ENCODE measurements at regions of chr4 and their contacts with region 1.

Region 1: GRCh38 chr4:6986781-6987587 is 56.2 kb upstream of the TADA2B start:
- H3K4me3 ChIP-seq: peak overlapping the region; percentile 75
- H3K27ac ChIP-seq: peak overlapping the region; percentile 65
- H3K4me1 ChIP-seq: peaks cover 8% of the 10 kb centered on the region
- CTCF ChIP-seq: no peak

Region 2: DNA sequence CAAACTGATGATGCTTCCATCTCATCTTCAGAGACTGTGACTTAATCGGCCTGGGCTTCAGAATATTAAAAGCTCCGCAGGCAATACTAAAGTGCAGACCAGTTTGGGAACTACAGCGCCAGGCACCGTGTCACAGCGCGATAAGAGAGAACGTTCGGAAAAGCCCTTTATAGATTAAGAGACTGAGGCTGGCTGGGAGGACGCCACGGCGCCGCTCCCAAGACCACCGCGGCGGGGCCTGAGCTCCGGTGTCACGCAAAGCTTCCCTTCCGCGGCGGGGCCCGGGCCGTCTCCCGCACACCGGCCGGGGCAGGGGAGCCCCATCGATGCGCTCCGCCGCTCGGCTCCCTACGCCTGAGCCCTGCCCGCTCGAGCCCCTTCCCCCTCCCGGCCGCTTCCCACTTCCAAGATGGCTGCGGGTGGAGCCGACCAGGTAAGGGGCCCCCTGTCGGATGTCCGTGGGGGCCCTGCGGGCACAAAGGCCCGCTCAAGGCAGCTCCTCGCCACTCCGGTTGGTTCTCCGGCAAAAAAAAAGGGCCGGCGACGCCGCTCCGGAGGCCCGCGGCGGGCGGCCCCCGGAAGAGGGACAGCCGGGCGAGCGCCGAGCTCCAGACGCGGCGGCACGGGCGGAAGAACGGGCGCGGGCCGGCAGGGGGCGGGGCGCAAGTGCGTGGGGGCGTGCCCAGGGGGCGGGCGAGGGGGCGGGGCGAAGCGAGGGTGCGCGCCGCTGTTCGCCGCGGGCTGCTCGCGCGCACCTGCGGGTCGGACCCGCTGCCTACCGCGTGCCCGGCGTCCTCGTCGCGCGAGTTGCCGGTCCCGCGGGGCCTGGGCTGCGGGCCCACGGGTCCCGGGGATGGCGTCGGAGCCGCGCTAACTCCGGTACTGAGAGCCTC is 77.7 kb before region 1 on chr4 and contains the start of gene TBC1D14:
- CTCF ChIA-PET with region 1: interaction called, 3 read pairs
- POLR2A ChIA-PET with region 1: interaction called, 10 read pairs
- H3K4me3 ChIP-seq: peak within 1 kb of the TSS; percentile 70
- H3K27ac ChIP-seq: peak within 1 kb of the TSS; percentile 88
- H3K4me1 ChIP-seq: no peaks in the 10 kb centered on the region
- CTCF ChIP-seq: peak; percentile 50; the same call in 1 of the 2 replicates

Region 3: GRCh38 chr4:6938237-6938636 is 48.7 kb before region 1 on chr4:
- CTCF ChIA-PET with region 1: no interaction called
- POLR2A ChIA-PET with region 1: no interaction called
- H3K4me3 ChIP-seq: no peak overlapping the region
- H3K27ac ChIP-seq: no peak overlapping the region
- H3K4me1 ChIP-seq: 0 out of 2 replicates have a peak, but pooled peaks cover 2% of the 10 kb centered on the region
- CTCF ChIP-seq: no peak

Region 4: GRCh38 chr4:6974138-6974848 is 12.7 kb before region 1 on chr4:
- CTCF ChIA-PET with region 1: interaction called, 18 read pairs
- POLR2A ChIA-PET with region 1: interaction called, 4 read pairs
- H3K4me3 ChIP-seq: no peak overlapping the region
- H3K27ac ChIP-seq: no peak overlapping the region
- H3K4me1 ChIP-seq: no peaks in the 10 kb centered on the region
- CTCF ChIP-seq: 0 out of 2 replicates have a peak, but pooled peaks have one; percentile 27

Measured in HEK293 (cell line).